ENCODE measurements at regions of chr1 and their contacts with region 1.

Region 1: DNA sequence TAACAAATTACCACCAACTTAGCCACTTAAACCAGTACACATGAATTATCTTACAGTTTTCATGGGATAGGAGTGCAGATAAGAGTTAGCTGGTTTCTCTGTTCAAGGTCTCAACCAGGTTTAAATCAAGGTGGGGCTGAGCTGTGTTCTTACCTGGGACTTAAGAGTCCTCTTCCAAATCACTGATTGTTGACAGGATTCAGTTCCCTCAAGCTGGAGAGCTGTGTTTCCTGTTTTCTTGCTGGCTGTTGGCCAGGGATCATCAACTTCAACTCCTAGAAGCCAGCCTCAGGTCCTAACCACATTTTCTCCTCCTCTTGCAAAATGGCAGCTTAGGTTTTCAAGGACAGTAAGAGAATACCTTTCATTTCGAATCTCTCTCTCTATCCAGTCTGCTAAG is 123.8 kb upstream of the CHRM3 start:
- DNase-seq: no peak
- H3K4me3 ChIP-seq: no peak overlapping the region
- H3K27ac ChIP-seq: no peak overlapping the region
- H3K4me1 ChIP-seq: no peaks in the 10 kb centered on the region
- H3K27me3 ChIP-seq: no peaks in the 10 kb centered on the region
- CTCF ChIP-seq: no peak
- POLR2A ChIP-seq: no peak

Region 2: DNA sequence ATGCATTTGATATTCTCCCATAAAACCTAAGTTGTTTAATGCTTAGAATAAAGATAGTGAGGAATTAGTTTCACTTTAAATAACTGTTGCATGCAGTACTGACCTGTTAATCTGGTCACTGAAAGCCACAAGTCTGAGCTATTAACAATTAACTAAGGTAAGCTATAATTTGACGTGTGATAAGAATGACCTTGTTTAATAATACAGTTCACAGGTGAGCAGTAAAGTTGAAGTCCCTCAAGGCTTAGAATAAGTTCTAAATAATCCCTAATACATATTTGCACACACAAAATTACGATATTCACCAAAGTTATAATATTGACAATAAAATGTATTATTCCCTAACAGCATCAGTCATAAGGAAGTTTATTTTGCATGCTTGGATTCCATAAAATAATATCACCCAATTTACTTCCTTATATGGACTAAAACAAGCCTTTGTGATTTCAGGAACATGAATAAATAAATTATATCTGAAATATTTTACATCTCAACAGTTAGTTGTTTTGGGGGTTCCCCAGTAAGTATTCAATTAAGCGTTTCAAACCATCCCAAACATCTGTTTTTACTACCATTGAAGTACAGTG is 53.2 kb after region 1 on chr1:
- intact Hi-C with region 1: no loop called
- DNase-seq: no peak
- H3K4me3 ChIP-seq: no peak overlapping the region
- H3K27ac ChIP-seq: no peak overlapping the region
- H3K4me1 ChIP-seq: no peaks in the 10 kb centered on the region
- H3K27me3 ChIP-seq: no peaks in the 10 kb centered on the region
- CTCF ChIP-seq: no peak
- POLR2A ChIP-seq: no peak

Region 3: GRCh38 chr1:240136402-240136801 is 873.9 kb after region 1 on chr1:
- intact Hi-C with region 1: loop called (anchors 10 kb)
- DNase-seq: no peak
- H3K4me3 ChIP-seq: no peak overlapping the region
- H3K27ac ChIP-seq: no peak overlapping the region
- H3K4me1 ChIP-seq: no peaks in the 10 kb centered on the region
- H3K27me3 ChIP-seq: no peaks in the 10 kb centered on the region
- CTCF ChIP-seq: no peak
- POLR2A ChIP-seq: no peak